CD4-positive, alpha-beta T cell (primary cell): ENCODE measurements at regions of chr1 and their contacts with region 1.

Region 1: DNA sequence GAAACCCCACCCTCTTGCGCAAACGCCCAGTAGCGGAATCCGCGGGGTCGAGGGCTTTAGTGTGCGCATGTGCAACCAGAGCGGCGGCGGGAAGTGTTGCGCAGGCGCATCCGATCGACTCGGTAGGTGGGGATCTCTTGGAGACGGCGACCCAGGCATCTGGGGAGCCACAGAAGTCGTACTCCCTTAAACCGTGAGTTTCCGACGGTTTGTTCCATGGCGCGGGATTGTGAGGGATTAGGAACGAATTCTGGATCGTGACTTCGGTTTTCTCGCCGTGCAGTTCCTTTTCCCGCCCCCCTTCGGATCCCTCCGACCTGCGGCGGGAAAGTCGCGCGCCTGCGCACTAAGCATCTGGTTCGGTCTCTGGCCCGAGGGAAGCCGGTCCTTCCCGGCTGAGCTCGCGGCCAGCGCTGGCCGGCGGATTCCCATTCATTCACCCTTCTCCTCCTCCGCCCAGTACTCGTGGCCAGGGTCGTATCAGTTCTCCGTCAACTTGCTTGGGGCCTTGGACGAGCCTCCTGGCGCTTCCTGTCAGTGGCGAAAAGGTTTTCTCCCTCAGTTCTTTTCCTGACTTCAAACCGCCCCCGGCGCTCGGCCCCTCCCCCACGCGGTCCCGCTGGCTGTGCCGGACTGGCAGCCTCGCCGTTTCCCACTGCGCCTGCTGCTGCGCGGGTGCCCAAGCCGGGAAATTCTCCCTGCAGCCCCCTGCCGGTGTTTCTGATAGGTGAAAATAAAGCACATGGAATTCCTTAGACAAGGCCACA is at the start of gene CDC7:
- DNase-seq: peak; percentile 61 to 92 (median 80)
- ATAC-seq: peak; percentile 83
- H3K4me3 ChIP-seq: peak within 1 kb of the TSS; percentile 74
- H3K4me3 Mint-ChIP-seq: no peak within 1 kb of the TSS
- H3K27ac ChIP-seq: peak within 1 kb of the TSS; percentile 35 to 62
- H3K27ac Mint-ChIP-seq: no peak within 1 kb of the TSS
- H3K4me1 ChIP-seq: peaks cover 13% of the 10 kb centered on the region
- H3K4me1 Mint-ChIP-seq: peaks cover 31% of the 10 kb centered on the region
- H3K27me3 ChIP-seq: no peaks in the 10 kb centered on the region
- H3K27me3 Mint-ChIP-seq: no peaks in the 10 kb centered on the region
- CTCF ChIP-seq: peak; percentile 61
- total RNA-seq, gene CDC7: 4.2 to 4.8 TPM

Region 2: GRCh38 chr1:91569411-91570119 is 68.6 kb after region 1 on chr1:
- CTCF ChIA-PET with region 1: no interaction called
- POLR2A ChIA-PET with region 1: no interaction called
- intact Hi-C with region 1: no loop called
- DNase-seq: peak in 3 of 14 experiments; percentile 29 to 63 (median 54)
- ATAC-seq: peak; percentile 57
- H3K4me3 ChIP-seq: no peak overlapping the region
- H3K4me3 Mint-ChIP-seq: peak overlapping the region; percentile 26
- H3K27ac ChIP-seq: no peak overlapping the region
- H3K27ac Mint-ChIP-seq: peak overlapping the region; percentile 16
- H3K4me1 ChIP-seq: peaks cover 21% of the 10 kb centered on the region
- H3K4me1 Mint-ChIP-seq: peaks cover 25% of the 10 kb centered on the region
- H3K27me3 ChIP-seq: no peaks in the 10 kb centered on the region
- H3K27me3 Mint-ChIP-seq: no peaks in the 10 kb centered on the region
- CTCF ChIP-seq: no peak

Region 3: GRCh38 chr1:92080128-92080985 is 579.4 kb after region 1 on chr1 and contains the start of gene BTBD8:
- CTCF ChIA-PET with region 1: no interaction called
- POLR2A ChIA-PET with region 1: no interaction called
- intact Hi-C with region 1: loop called in 1 of 2 experiments (anchors 10 kb)
- DNase-seq: peak; percentile 73 to 92 (median 84)
- ATAC-seq: peak; percentile 95
- H3K4me3 ChIP-seq: peak within 1 kb of the TSS; percentile 69
- H3K4me3 Mint-ChIP-seq: peak within 1 kb of the TSS; percentile 94
- H3K27ac ChIP-seq: peak within 1 kb of the TSS; percentile 23 to 64
- H3K27ac Mint-ChIP-seq: peak within 1 kb of the TSS; percentile 94
- H3K4me1 ChIP-seq: peaks cover 8% of the 10 kb centered on the region
- H3K4me1 Mint-ChIP-seq: peaks cover 25% of the 10 kb centered on the region
- H3K27me3 ChIP-seq: no peaks in the 10 kb centered on the region
- H3K27me3 Mint-ChIP-seq: no peaks in the 10 kb centered on the region
- CTCF ChIP-seq: peak; percentile 22
- total RNA-seq, gene BTBD8: 1.8 to 2.8 TPM